ENCODE measurements at regions of chr4 and their contacts with region 1.

Region 1: DNA sequence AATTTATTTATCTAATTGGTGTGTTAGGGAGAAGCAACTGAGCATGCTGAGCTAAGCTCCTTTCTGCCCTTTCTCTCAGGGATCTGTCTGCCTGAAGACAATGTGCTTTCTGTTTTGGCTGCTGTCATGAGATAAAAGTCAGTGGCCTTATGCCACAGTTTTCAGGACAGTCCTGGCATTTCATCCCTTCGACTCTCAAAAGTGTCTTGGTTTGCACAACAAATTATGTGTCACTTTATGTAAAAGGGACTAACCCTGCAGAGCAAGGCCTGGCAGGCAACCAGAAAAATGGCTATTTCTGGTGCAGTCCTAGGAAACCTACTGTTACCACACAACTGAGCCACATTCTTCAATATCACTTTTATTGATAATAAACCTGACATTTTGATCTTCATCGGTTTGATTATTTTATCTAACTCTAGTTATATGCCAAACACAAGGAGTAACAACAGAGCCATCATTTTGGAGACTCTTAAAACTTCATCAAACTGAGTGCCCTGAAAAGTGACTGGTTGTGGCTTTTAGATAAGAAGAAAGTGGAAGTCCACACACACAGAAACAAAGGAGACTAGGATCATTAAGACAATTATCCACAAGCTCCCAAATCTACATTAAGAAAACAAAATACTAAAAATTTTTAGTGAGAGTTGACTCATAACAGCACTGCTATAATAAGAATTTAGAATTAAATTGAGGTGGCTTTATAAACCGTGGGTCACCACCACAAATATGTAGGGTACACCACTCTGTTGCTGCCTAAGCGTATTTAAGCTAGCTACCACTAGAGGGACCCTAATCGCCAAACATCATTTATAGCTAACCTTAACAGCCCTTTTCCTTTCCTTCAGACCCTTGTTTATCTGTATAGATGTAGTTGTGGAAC is 95.9 kb upstream of the PTPN13 start:
- DNase-seq: peak; percentile 40
- H3K4me3 ChIP-seq: no peak overlapping the region
- H3K27ac ChIP-seq: no peak overlapping the region
- H3K4me1 ChIP-seq: peaks cover 26% of the 10 kb centered on the region
- H3K27me3 ChIP-seq: no peaks in the 10 kb centered on the region
- CTCF ChIP-seq: peak; percentile 78 to 89

Region 2: GRCh38 chr4:86508436-86508835 is 10.2 kb after region 1 on chr4:
- CTCF ChIA-PET with region 1: no interaction called
- dilution Hi-C with region 1: no loop called
- in situ Hi-C with region 1: no loop called
- intact Hi-C with region 1: no loop called
- DNase-seq: no peak
- H3K4me3 ChIP-seq: no peak overlapping the region
- H3K27ac ChIP-seq: no peak overlapping the region
- H3K4me1 ChIP-seq: no peaks in the 10 kb centered on the region
- H3K27me3 ChIP-seq: no peaks in the 10 kb centered on the region
- CTCF ChIP-seq: no peak

Region 3: DNA sequence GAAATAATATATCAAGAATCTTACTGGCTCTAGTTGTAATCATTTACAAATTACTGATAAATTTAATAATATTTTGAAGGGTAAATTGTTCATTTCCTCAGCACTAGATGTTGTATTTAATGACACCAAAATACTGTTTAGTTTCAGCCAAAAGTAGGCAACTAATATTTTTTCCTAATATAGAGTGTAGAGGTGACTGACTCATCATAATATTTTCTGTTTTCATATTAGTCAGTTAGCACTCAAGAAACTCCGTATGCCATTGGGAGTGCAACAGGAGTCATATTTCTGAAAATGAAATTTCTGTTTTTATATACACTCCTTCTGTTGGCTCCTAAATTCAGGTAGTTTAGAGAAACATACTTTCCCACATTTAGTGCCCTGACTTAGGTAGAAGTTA is 59.3 kb after region 1 on chr4:
- CTCF ChIA-PET with region 1: no interaction called
- dilution Hi-C with region 1: no loop called
- in situ Hi-C with region 1: no loop called
- intact Hi-C with region 1: no loop called
- DNase-seq: peak; percentile 62
- H3K4me3 ChIP-seq: no peak overlapping the region
- H3K27ac ChIP-seq: peak overlapping the region; percentile 76
- H3K4me1 ChIP-seq: peaks cover 22% of the 10 kb centered on the region
- H3K27me3 ChIP-seq: no peaks in the 10 kb centered on the region
- CTCF ChIP-seq: no peak

Region 4: DNA sequence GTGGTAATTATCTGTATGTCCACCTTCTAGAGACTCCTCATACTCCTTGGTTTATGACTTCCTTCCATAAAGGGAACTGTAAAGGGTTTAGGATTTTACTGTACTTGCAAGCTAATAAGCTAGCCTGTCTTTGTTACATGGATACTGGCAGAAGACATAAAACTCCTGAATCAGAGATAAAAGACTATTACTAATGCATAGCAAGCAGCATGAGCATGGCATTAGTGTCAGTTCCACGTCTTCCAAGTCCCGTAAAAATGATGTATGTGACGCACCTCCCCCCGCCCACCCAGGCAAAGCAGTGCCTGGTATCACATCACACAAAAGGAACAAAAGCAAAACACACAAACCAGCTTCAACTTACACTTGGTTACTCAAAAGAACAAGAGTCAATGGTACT is 280.0 kb after region 1 on chr4:
- CTCF ChIA-PET with region 1: no interaction called
- dilution Hi-C with region 1: no loop called
- in situ Hi-C with region 1: no loop called
- intact Hi-C with region 1: loop called (anchors 5 kb)
- DNase-seq: no peak
- H3K4me3 ChIP-seq: no peak overlapping the region
- H3K27ac ChIP-seq: no peak overlapping the region
- H3K4me1 ChIP-seq: no peaks in the 10 kb centered on the region
- H3K27me3 ChIP-seq: no peaks in the 10 kb centered on the region
- CTCF ChIP-seq: no peak

Region 5: DNA sequence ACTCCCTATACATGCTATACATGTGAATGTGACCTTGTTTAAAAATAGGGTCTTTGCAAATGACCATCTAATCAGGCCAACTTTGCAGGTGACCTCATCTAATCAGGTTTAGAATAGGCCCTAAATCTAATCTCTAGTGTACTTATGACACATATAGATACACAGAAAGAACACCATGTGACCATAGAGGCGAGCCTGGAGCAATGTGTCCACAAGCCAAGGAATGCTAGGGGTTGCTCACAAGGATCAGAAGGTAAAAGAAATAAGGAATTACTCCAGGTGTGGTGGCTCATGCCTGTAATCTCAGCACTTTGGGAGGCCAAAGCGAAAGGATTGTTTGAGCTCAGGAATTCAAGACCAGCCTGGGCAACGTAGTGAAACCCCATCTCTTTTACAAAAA is 403.6 kb after region 1 on chr4:
- CTCF ChIA-PET with region 1: no interaction called
- dilution Hi-C with region 1: no loop called
- in situ Hi-C with region 1: loop called (anchors 5 kb)
- intact Hi-C with region 1: no loop called
- DNase-seq: no peak
- H3K4me3 ChIP-seq: no peak overlapping the region
- H3K27ac ChIP-seq: no peak overlapping the region
- H3K4me1 ChIP-seq: peaks cover 4% of the 10 kb centered on the region
- H3K27me3 ChIP-seq: no peaks in the 10 kb centered on the region
- CTCF ChIP-seq: no peak

Measured in mammary epithelial cell (primary cell).